GM13977 (cell line): ENCODE measurements at regions of chr4 and their contacts with region 1.

Region 1: DNA sequence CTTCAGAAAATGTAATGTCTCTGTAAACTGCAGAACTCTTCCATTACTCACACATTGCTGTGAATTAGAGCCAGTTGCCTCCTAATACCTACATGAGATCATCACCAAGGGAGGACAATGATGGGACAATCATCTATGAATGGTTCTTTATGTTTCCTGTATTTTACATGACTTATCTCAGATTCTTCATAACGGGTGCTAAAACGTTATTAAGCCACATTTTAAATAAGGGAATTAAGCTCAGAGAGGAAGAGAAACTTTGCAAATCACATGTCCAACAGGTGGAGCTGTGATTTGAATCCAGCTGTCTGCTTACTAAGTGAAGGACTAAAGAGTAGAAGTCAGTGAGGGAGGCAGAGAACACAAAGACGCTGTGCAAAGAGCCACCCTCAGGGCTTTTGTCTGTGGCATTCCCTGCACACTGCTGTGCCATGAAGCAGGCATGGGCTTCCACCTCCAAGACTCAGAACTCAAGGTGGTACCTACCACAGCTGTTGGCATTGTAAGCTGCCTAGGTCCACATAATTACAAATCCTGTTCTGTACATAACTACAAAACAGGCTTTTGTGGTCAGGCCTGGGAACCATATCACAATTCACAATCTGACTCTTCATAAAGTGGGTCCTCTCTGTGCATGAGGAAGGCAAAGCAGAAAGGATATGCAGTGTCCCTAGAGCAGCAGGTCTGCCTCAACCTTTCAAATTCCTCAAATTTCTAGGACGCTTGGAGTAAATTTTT is 12.8 kb downstream of the TBC1D9 start:
- DNase-seq: no peak
- CTCF ChIP-seq: peak; percentile 47

Region 2: DNA sequence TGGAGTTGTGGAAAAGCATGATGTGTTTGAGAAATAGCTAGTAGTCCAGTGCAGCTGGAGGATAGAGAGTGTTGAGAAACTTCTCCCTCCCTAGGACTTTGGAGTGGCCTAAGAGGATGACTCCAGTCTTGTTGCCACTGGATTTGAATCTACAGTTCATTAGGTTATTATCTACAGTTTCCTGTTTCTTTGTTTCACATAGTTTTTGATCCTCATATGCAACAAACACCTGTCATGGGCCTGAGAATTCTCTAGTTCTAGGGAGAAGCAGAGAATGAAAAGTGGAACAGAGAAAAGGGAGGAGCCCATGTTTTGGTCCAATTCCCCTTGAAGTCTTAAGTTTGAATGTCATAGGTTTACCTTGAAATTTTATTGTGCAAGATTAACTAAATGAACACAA is 86.5 kb after region 1 on chr4:
- in situ Hi-C with region 1: loop called (anchors 25 kb)
- DNase-seq: no peak
- CTCF ChIP-seq: no peak